ENCODE measurements at regions of chr16 and their contacts with region 1.

Region 1: GRCh38 chr16:67968400-67969253 is at the start of gene SLC12A4:
- DNase-seq: peak; percentile 93
- H3K4me3 Mint-ChIP-seq: peak within 1 kb of the TSS; percentile 97
- H3K27ac Mint-ChIP-seq: peak within 1 kb of the TSS; percentile 78
- H3K4me1 Mint-ChIP-seq: peaks cover 10% of the 10 kb centered on the region
- H3K27me3 Mint-ChIP-seq: no peaks in the 10 kb centered on the region
- total RNA-seq, gene SLC12A4: 24.3 to 28.9 TPM

Region 2: DNA sequence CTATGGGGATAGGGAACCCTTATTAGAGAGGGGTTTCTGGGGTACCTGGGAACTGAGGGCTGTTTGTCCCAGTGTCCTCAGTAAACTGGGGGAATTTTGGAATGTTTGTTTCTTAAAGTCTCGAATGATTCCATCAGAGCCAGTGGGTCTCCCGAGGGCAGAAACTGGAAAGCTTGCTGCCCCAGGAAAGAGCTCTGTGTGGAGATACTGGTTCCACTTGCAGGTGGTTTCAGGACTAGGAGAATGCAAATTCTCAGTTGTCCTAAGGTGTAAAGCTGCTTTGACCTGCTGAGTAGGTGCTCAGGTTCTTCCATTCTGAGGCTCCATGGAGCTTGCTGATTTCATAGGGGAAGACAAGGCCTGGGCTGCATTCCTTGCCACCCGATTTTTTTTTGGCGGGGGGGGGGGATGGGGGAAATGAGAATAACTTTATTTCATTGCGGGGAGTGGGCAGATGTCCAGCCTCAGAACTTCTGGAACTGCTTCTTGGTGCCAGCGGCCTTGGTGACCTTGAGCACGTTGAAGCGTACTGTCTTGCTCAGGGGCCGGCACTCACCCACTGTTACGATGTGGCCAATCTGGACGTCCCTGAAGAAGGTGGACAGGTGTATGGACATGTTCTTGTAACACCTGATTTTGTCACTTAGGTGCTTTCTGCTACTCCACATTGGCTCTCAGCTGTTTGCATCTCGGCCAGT is 113.0 kb before region 1 on chr16:
- CTCF ChIA-PET with region 1: no interaction called
- intact Hi-C with region 1: no loop called
- DNase-seq: no peak
- H3K4me3 Mint-ChIP-seq: no peak overlapping the region
- H3K27ac Mint-ChIP-seq: peak overlapping the region; percentile 8
- H3K4me1 Mint-ChIP-seq: peaks cover 33% of the 10 kb centered on the region
- H3K27me3 Mint-ChIP-seq: no peaks in the 10 kb centered on the region

Region 3: GRCh38 chr16:67979955-67980678 is 11.5 kb after region 1 on chr16 and contains the start of gene DPEP3:
- CTCF ChIA-PET with region 1: no interaction called
- intact Hi-C with region 1: loop called (anchors 1 kb)
- DNase-seq: no peak
- H3K4me3 Mint-ChIP-seq: no peak within 1 kb of the TSS
- H3K27ac Mint-ChIP-seq: no peak within 1 kb of the TSS
- H3K4me1 Mint-ChIP-seq: peaks cover 24% of the 10 kb centered on the region
- H3K27me3 Mint-ChIP-seq: no peaks in the 10 kb centered on the region
- total RNA-seq, gene DPEP3: 0.19 TPM in 1 of 2 experiments, not detected in the other

Region 4: GRCh38 chr16:67993189-67994039 is 24.8 kb after region 1 on chr16:
- CTCF ChIA-PET with region 1: interaction called, 4 read pairs
- intact Hi-C with region 1: loop called (anchors 1 kb)
- DNase-seq: peak; percentile 83
- H3K4me3 Mint-ChIP-seq: peak overlapping the region; percentile 80
- H3K27ac Mint-ChIP-seq: peak overlapping the region; percentile 92
- H3K4me1 Mint-ChIP-seq: peaks cover 37% of the 10 kb centered on the region
- H3K27me3 Mint-ChIP-seq: no peaks in the 10 kb centered on the region

Region 5: DNA sequence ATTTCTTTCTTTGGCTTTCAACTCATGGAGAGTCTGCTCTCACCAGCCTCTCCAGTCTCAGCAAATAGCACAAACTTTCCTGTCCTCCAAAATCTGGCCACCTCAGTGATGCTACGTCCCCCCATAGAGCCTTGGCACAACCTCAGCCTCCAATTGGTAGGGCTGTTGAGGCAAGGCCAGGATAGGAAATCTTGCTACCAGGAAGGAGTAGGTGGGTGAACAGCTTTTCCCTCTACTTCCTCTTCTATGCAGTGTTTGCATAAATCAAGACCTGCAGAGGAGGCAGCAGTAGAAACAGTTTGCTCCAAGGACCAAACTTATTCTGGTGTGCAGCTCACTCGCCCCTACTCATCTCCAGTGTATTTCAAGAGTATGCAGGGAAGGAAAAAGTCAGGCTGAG is 31.4 kb after region 1 on chr16:
- CTCF ChIA-PET with region 1: interaction called, 3 read pairs
- intact Hi-C with region 1: loop called (anchors 1 kb)
- DNase-seq: peak; percentile 25
- H3K4me3 Mint-ChIP-seq: peak overlapping the region; percentile 80
- H3K27ac Mint-ChIP-seq: peak overlapping the region; percentile 94
- H3K4me1 Mint-ChIP-seq: peaks cover 49% of the 10 kb centered on the region
- H3K27me3 Mint-ChIP-seq: no peaks in the 10 kb centered on the region

Region 6: GRCh38 chr16:68022704-68023522 is 54.3 kb after region 1 on chr16 and contains the starts of genes DDX28 and DUS2:
- CTCF ChIA-PET with region 1: no interaction called
- intact Hi-C with region 1: loop called (anchors 2 kb)
- DNase-seq: peak; percentile 96
- H3K4me3 Mint-ChIP-seq: peak within 1 kb of the TSS; percentile 99
- H3K27ac Mint-ChIP-seq: peak within 1 kb of the TSS; percentile 94
- H3K4me1 Mint-ChIP-seq: peaks cover 38% of the 10 kb centered on the region
- H3K27me3 Mint-ChIP-seq: no peaks in the 10 kb centered on the region
- total RNA-seq, gene DDX28: 9.4 to 9.7 TPM
- total RNA-seq, gene DUS2: 22.9 to 25.2 TPM

Region 7: GRCh38 chr16:68040507-68041288 is 72.1 kb after region 1 on chr16:
- CTCF ChIA-PET with region 1: interaction called, 7 read pairs
- intact Hi-C with region 1: loop called (anchors 1 kb)
- DNase-seq: peak; percentile 95
- H3K4me3 Mint-ChIP-seq: no peak overlapping the region
- H3K27ac Mint-ChIP-seq: no peak overlapping the region
- H3K4me1 Mint-ChIP-seq: peaks cover 7% of the 10 kb centered on the region
- H3K27me3 Mint-ChIP-seq: no peaks in the 10 kb centered on the region

Region 8: DNA sequence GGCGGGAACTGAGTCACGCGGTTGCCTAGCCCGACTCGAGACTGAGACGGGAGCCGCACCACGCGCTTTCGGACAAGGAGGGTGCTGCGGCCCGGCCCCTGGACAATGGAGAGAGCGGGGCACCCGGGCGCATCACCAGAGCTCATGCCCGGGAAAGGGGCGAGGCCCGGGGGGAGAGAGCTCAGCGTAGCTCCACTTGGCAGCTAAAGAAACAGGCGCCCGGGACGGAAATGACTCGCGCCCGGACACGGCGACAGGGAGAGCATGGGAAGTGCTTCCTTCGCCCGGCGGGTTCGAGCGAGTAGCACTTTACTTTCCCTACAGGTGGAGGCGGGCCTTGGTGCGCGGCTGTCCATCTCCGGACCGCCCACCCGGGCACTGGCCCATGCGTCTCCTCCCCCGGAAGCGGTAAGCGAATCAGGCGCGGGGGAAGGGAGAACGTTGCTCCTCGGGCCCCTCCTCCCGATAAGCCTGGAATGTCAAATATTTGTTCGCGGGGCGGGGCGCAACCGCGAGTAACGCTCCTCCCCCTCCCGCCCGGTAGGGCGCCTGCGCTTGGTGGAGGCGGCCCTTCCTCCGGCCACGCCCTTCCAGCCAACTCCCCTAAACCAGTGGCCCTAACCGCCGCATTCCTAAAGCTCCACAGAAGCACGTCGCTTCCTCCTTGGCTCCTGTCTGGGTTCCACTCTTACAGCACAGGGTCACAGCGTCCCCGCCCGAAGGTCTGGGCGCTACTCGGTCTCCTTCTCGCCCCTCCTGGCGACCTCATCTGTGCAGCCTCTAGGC is 268.8 kb after region 1 on chr16:
- CTCF ChIA-PET with region 1: no interaction called
- intact Hi-C with region 1: loop called (anchors 1 kb)
- DNase-seq: peak; percentile 95
- H3K4me3 Mint-ChIP-seq: peak overlapping the region; percentile 93
- H3K27ac Mint-ChIP-seq: peak overlapping the region; percentile 79
- H3K4me1 Mint-ChIP-seq: peaks cover 30% of the 10 kb centered on the region
- H3K27me3 Mint-ChIP-seq: no peaks in the 10 kb centered on the region

Measured in activated naive CD4-positive, alpha-beta T cell treated with anti-CD3 and anti-CD28 coated beads for 36 hours (primary cell).